IMR-90 (cell line): ENCODE measurements at regions of chr1 and their contacts with region 1.

Region 1: GRCh38 chr1:85576642-85577418 is 3.7 kb upstream of the CCN1 start:
- DNase-seq: peak; percentile 88
- ATAC-seq: peak; percentile 27
- H3K4me3 ChIP-seq: peak overlapping the region; percentile 87
- H3K27ac ChIP-seq: peak overlapping the region; percentile 96
- H3K4me1 ChIP-seq: peaks cover 12% of the 10 kb centered on the region
- H3K27me3 ChIP-seq: no peaks in the 10 kb centered on the region
- CTCF ChIP-seq: peak; percentile 64
- POLR2A ChIP-seq: peak; percentile 41; the same call in 1 of the 2 replicates
- RAD21 ChIP-seq: peak; percentile 39; the same call in 1 of the 2 replicates

Region 2: DNA sequence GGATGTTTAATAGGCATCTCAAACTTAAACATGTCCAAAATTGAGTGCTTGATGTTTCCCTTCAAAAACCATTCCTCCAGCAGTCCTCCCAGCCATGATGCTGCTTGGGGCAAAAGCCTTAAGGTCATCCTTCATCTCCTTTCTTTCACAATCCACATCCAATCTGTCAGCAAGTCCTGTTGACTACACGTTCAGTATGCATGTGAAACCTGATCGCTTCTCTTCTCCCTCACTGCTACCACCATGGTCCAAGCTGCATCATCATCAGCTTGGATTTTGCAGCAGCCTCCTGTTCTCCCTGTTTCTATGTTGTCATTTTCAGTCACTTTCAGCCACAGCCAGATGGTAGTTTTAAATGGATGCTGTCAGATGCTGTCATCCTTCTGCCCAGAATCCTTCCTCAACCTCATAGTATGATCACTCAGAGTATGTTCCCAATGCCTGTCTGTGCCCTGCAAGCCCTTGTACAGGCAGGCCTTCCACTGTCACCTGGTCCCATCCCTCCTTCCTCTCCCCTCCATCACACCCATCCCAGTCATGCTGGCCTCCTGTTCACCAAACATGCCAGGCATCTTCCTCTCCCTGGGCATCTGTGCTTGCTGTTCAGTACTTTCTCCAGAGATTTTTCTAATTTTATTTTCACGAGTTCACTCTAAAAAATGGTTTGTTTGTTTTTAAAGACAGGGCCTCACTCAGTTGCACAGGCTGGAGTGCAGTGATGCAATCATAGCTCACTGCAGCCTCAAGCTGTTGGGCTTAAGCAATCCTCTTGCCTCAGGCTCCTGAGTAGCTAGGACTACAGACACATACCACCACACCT is 442.0 kb before region 1 on chr1:
- CTCF ChIA-PET with region 1: no interaction called
- POLR2A ChIA-PET with region 1: no interaction called
- dilution Hi-C with region 1: no loop called
- in situ Hi-C with region 1: no loop called
- intact Hi-C with region 1: no loop called
- DNase-seq: peak; percentile 86
- ATAC-seq: peak; percentile 93
- H3K4me3 ChIP-seq: no peak overlapping the region
- H3K27ac ChIP-seq: peak overlapping the region; percentile 84; the same call in 1 of the 2 replicates
- H3K4me1 ChIP-seq: peaks cover 9% of the 10 kb centered on the region
- H3K27me3 ChIP-seq: no peaks in the 10 kb centered on the region
- CTCF ChIP-seq: no peak
- POLR2A ChIP-seq: no peak
- RAD21 ChIP-seq: no peak

Region 3: DNA sequence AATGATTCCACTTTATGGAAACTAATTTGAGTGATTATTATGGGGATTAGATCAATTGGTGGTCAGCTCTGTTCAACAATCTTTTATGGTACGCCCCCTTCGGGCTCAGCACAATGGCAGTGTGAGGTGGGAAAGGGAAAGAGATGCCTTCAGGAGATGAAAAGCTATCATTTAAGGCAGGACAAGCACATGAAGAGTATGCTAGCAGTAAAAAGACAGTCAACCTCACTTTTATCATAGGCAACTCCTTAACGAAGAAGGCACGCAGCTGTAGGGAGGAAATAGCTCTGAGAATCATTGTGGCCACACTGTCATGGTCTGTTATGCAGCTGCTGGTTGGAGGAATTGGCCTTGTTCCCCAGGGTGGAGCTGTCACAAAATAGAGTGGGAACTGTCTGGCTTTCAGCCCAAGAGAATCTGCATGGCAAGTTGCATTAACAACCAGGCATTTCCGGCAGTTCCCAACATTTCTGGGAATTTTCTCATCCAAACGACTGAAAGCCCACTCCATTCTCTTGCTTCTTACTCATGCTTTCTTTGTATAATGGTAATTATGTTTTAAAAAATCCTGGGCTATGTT is 246.0 kb before region 1 on chr1:
- CTCF ChIA-PET with region 1: no interaction called
- POLR2A ChIA-PET with region 1: interaction called, 7 read pairs
- dilution Hi-C with region 1: no loop called
- in situ Hi-C with region 1: no loop called
- intact Hi-C with region 1: loop called (anchors 5 kb)
- DNase-seq: peak; percentile 99
- ATAC-seq: peak; percentile 62
- H3K4me3 ChIP-seq: no peak overlapping the region
- H3K27ac ChIP-seq: peak overlapping the region; percentile 86
- H3K4me1 ChIP-seq: peaks cover 36% of the 10 kb centered on the region
- H3K27me3 ChIP-seq: no peaks in the 10 kb centered on the region
- CTCF ChIP-seq: no peak
- POLR2A ChIP-seq: peak; percentile 16; the same call in 1 of the 2 replicates
- RAD21 ChIP-seq: no peak

Region 4: DNA sequence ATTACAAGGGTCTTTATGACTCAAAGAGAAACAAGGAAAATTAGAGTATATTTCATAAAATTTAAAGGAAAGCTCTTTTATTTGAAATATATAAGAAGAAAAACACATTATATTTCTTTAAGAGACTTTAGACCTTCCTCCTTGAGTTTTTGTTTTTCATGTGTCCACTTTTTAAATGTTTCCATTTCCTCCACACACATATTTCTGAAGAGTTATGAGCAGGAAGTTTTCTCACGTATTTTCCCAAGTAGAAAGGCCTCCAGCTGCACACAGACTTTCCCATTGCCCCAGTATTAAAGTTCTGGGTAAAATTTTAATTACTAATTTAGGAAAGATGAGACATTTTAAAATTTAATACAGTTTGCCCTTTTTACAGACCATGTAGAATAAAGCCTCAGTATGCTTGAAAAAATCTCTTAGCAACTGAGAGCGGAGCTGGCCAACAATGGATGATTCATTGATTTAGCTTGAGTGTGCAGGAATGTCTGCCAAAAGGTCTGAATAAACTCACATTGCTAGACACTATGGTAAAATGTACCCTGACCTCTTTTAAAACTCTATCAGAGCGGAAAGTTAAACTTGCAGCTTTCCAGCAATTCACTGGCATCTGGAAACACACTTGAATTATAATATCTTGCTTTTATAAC is 169.8 kb before region 1 on chr1:
- CTCF ChIA-PET with region 1: no interaction called
- POLR2A ChIA-PET with region 1: interaction called, 3 read pairs
- dilution Hi-C with region 1: no loop called
- in situ Hi-C with region 1: no loop called
- intact Hi-C with region 1: loop called (anchors 10 kb)
- DNase-seq: peak; percentile 94
- ATAC-seq: peak; percentile 93
- H3K4me3 ChIP-seq: no peak overlapping the region; the same call in 1 of the 2 replicates
- H3K27ac ChIP-seq: no peak overlapping the region
- H3K4me1 ChIP-seq: peaks cover 10% of the 10 kb centered on the region
- H3K27me3 ChIP-seq: no peaks in the 10 kb centered on the region
- CTCF ChIP-seq: no peak
- POLR2A ChIP-seq: no peak
- RAD21 ChIP-seq: 0 out of 2 replicates have a peak, but pooled peaks have one; percentile 10

Region 5: GRCh38 chr1:85464497-85465098 is 112.2 kb before region 1 on chr1:
- CTCF ChIA-PET with region 1: interaction called, 4 read pairs
- POLR2A ChIA-PET with region 1: interaction called, 8 read pairs
- dilution Hi-C with region 1: no loop called
- in situ Hi-C with region 1: loop called (anchors 10 kb)
- intact Hi-C with region 1: loop called (anchors 2 kb)
- DNase-seq: peak; percentile 73
- ATAC-seq: peak; percentile 80
- H3K4me3 ChIP-seq: peak overlapping the region; percentile 95
- H3K27ac ChIP-seq: peak overlapping the region; percentile 92
- H3K4me1 ChIP-seq: peaks cover 7% of the 10 kb centered on the region
- H3K27me3 ChIP-seq: no peaks in the 10 kb centered on the region
- CTCF ChIP-seq: no peak
- POLR2A ChIP-seq: peak; percentile 47; the same call in 1 of the 2 replicates
- RAD21 ChIP-seq: no peak; the same call in 1 of the 2 replicates

Region 6: DNA sequence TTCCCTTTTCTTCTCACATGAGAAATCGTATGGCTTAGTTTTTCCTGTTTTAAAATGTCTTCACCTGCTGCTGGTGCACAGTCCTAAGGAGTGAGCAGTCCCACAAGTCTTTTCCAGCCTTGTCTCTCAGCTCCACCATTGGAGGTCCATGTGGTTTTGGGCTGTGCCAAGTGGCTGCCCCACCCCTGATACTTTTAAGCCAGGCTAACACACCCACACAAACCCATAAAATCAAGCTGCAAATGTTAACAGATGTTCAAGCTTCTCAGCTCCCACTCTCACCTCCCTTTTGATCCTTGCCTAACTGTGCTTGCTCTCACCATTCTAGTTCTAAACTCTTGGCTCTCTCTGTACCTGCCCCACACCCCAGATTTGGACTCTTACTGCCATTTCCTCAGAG is 654.2 kb after region 1 on chr1:
- CTCF ChIA-PET with region 1: no interaction called
- POLR2A ChIA-PET with region 1: no interaction called
- dilution Hi-C with region 1: no loop called
- in situ Hi-C with region 1: no loop called
- intact Hi-C with region 1: no loop called
- DNase-seq: no peak
- ATAC-seq: no peak
- H3K4me3 ChIP-seq: no peak overlapping the region
- H3K27ac ChIP-seq: no peak overlapping the region
- H3K4me1 ChIP-seq: no peaks in the 10 kb centered on the region
- H3K27me3 ChIP-seq: no peaks in the 10 kb centered on the region; the same call in 1 of the 2 replicates
- CTCF ChIP-seq: no peak
- POLR2A ChIP-seq: no peak
- RAD21 ChIP-seq: no peak